ENCODE measurements at regions of chr6 and their contacts with region 1.

Region 1: GRCh38 chr6:78810146-78810545 is 57.2 kb upstream of the IRAK1BP1 start:
- DNase-seq: no peak
- H3K4me3 Mint-ChIP-seq: no peak overlapping the region
- H3K27ac Mint-ChIP-seq: no peak overlapping the region
- H3K4me1 Mint-ChIP-seq: no peaks in the 10 kb centered on the region
- H3K27me3 Mint-ChIP-seq: no peaks in the 10 kb centered on the region

Region 2: GRCh38 chr6:78824045-78824444 is 13.9 kb after region 1 on chr6:
- intact Hi-C with region 1: loop called (anchors 1 kb)
- DNase-seq: no peak
- H3K4me3 Mint-ChIP-seq: no peak overlapping the region
- H3K27ac Mint-ChIP-seq: no peak overlapping the region
- H3K4me1 Mint-ChIP-seq: no peaks in the 10 kb centered on the region
- H3K27me3 Mint-ChIP-seq: no peaks in the 10 kb centered on the region

Region 3: GRCh38 chr6:79391480-79391879 is 581.3 kb after region 1 on chr6:
- intact Hi-C with region 1: no loop called
- DNase-seq: no peak
- H3K4me3 Mint-ChIP-seq: no peak overlapping the region
- H3K27ac Mint-ChIP-seq: no peak overlapping the region
- H3K4me1 Mint-ChIP-seq: no peaks in the 10 kb centered on the region
- H3K27me3 Mint-ChIP-seq: no peaks in the 10 kb centered on the region